Cardiac septum (tissue), 1 donor: ENCODE measurements at regions of chr11 and their contacts with region 1.

Region 1: GRCh38 chr11:9137293-9138132 is 46.1 kb upstream of the SCUBE2 start:
- DNase-seq: no peak

Region 2: GRCh38 chr11:8917157-8917825 is 220.2 kb before region 1 on chr11:
- intact Hi-C with region 1: loop called (anchors 5 kb)
- DNase-seq: no peak

Region 3: DNA sequence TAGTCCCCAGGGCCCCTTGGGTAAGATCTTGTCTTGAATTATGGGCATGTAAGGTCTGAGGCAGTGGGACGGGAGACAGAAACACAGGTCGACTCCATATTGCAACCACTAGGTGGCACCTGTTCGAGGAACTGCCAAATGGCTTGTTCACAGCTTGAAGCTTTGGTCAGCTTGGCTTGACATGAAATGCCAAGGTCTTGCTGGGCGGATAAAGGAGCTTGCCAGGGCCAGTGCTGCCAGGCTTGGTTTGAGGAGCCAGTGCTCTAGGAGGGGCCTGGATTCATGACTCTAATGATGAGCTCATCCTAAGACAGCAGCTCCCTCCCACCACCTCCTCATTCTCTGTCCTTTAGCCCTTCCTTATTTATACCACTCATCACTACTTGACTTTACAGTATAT is 121.8 kb before region 1 on chr11:
- intact Hi-C with region 1: loop called (anchors 2 kb)
- DNase-seq: no peak